Activated T-helper 2 cell treated with anti-CD3 and anti-CD28 coated beads, Interferon-gamma antibody, Interleukin-2, Interleukin-4, amounts not matched to agents 10 μg/mL and 5 μg/mL and 100 μg/mL, durations not matched to agents 14 hours and 24 hours and 36 hours (primary cell): ENCODE measurements at regions of chr12 and their contacts with region 1.

Region 1: GRCh38 chr12:132489602-132490239 is at the start of gene FBRSL1:
- DNase-seq: peak; percentile 87
- H3K4me3 Mint-ChIP-seq: peak within 1 kb of the TSS; percentile 84
- H3K27ac Mint-ChIP-seq: peak within 1 kb of the TSS; percentile 92
- H3K4me1 Mint-ChIP-seq: peaks cover 41% of the 10 kb centered on the region
- H3K27me3 Mint-ChIP-seq: no peaks in the 10 kb centered on the region
- total RNA-seq, gene FBRSL1: 66.0 and 67.3 TPM in 2 replicates

Region 2: GRCh38 chr12:132189378-132190011 is 300.2 kb before region 1 on chr12:
- intact Hi-C with region 1: loop called (anchors 10 kb)
- DNase-seq: peak; percentile 93
- H3K4me3 Mint-ChIP-seq: peak overlapping the region; percentile 93
- H3K27ac Mint-ChIP-seq: peak overlapping the region; percentile 82
- H3K4me1 Mint-ChIP-seq: peaks cover 27% of the 10 kb centered on the region
- H3K27me3 Mint-ChIP-seq: peaks cover 7% of the 10 kb centered on the region

Region 3: GRCh38 chr12:132445884-132446632 is 43.7 kb before region 1 on chr12:
- intact Hi-C with region 1: loop called (anchors 2 kb)
- DNase-seq: peak; percentile 69
- H3K4me3 Mint-ChIP-seq: peak overlapping the region; percentile 87
- H3K27ac Mint-ChIP-seq: peak overlapping the region; percentile 97
- H3K4me1 Mint-ChIP-seq: peaks cover 26% of the 10 kb centered on the region
- H3K27me3 Mint-ChIP-seq: no peaks in the 10 kb centered on the region

Region 4: DNA sequence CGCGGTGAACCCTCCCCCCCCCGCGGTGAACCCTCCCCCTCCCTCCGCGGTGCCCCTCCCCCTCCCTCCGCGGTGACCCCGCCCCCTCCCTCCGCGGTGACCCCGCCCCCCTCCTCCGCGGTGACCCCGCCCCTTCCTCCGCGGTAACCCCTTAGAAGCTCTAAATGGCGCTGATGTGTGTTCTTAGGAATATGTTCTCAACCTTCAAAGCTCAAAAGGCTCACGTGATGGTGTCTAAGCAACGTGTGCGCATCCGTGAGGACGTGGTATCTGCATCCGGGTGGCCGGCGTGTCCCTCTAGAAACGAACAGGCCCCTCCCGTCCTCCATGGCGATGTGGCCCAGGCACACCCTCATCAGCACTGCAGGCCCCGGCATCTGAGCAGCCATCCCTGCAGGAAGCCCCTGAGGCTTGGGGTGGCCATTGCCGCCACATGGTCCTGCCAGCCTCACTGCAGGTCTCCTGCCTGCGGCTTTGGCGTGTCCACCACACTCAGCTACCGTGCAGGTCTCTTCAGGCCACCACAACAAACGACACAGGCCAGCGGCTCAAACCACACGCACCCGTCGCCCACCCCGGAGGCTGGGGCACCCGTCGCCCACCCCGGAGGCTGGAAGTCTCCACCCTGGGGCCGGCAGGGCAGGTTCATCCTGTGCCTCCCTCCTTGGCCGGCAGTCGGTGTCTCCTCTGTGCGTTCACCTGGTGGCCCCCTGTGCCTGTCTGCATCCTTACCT is 14.2 kb before region 1 on chr12:
- intact Hi-C with region 1: loop called (anchors 2 kb)
- DNase-seq: no peak
- H3K4me3 Mint-ChIP-seq: no peak overlapping the region
- H3K27ac Mint-ChIP-seq: no peak overlapping the region
- H3K4me1 Mint-ChIP-seq: peaks cover 26% of the 10 kb centered on the region
- H3K27me3 Mint-ChIP-seq: peaks cover 2% of the 10 kb centered on the region

Region 5: DNA sequence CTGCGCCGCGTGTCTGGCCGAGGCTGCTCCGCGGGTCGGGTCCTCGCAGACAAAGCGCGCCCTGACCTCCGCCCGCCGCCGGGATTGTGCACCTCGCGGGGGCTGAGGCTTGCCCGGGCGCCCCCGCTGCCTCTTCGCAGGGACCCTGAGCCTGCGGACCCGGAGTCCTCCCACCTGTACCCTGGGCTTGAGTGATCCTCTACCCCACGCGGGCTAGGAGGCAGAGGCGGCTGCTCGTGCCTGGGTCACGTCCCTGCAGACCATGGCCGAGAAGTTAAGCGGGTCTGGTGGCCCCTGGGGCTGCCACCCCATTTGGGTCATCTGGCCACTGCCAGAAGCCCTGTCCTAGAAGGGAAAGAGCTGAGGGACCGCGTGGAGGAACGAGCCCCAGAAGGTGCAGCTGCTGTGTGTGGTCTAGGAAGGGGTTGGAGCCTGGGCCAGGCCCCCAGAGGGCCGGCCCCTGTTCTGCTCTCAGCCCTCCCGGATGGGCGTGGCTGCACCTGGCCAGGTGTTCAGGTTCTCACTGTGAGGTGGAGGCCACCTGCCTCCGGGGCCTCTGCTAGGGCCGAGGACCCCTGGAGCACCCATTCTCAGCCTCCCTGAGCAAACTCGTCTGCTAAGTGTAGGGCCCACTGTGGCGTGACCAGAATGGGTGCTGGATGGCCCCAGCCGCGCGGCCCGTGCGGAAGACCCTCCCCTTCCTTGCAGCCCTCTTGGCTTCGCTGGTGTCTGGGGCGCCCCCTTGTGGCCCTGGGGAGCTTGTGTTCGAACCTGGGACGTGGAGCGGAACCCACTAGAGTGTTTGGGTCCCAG is 71.1 kb after region 1 on chr12:
- intact Hi-C with region 1: no loop called
- DNase-seq: peak; percentile 60
- H3K4me3 Mint-ChIP-seq: peak overlapping the region; percentile 71
- H3K27ac Mint-ChIP-seq: no peak overlapping the region
- H3K4me1 Mint-ChIP-seq: peaks cover 8% of the 10 kb centered on the region
- H3K27me3 Mint-ChIP-seq: peaks cover 6% of the 10 kb centered on the region